ENCODE measurements at regions of chr17 and their contacts with region 1.

Region 1: GRCh38 chr17:76709077-76709950 is 1.5 kb downstream of the MXRA7 start:
- DNase-seq: peak in 5 of 6 donors; percentile 52 to 76 (median 65)
- ATAC-seq: peak; percentile 35 to 69 (median 57)
- H3K4me3 ChIP-seq: peak overlapping the region; percentile 49 to 69 (median 60)
- H3K27ac ChIP-seq: peak overlapping the region; percentile 76 to 81 (median 78)
- H3K4me1 ChIP-seq: peaks cover 8 to 12% (median 10%) of the 10 kb centered on the region in 3 donors
- H3K27me3 ChIP-seq: no peaks in the 10 kb centered on the region
- CTCF ChIP-seq: no peak

Region 2: GRCh38 chr17:76529224-76530094 is 179.9 kb before region 1 on chr17:
- intact Hi-C with region 1: loop called in 1 of 3 experiments (anchors 10 kb)
- DNase-seq: peak in 4 of 6 donors; percentile 33 to 78 (median 45)
- ATAC-seq: peak; percentile 10 to 67 (median 48)
- H3K4me3 ChIP-seq: no peak overlapping the region
- H3K27ac ChIP-seq: peak overlapping the region in 3 of 4 donors; percentile 28 to 62 (median 41)
- H3K4me1 ChIP-seq: peaks cover 5 to 8% (median 8%) of the 10 kb centered on the region in 3 donors
- H3K27me3 ChIP-seq: no peaks in the 10 kb centered on the region
- CTCF ChIP-seq: no peak

Region 3: DNA sequence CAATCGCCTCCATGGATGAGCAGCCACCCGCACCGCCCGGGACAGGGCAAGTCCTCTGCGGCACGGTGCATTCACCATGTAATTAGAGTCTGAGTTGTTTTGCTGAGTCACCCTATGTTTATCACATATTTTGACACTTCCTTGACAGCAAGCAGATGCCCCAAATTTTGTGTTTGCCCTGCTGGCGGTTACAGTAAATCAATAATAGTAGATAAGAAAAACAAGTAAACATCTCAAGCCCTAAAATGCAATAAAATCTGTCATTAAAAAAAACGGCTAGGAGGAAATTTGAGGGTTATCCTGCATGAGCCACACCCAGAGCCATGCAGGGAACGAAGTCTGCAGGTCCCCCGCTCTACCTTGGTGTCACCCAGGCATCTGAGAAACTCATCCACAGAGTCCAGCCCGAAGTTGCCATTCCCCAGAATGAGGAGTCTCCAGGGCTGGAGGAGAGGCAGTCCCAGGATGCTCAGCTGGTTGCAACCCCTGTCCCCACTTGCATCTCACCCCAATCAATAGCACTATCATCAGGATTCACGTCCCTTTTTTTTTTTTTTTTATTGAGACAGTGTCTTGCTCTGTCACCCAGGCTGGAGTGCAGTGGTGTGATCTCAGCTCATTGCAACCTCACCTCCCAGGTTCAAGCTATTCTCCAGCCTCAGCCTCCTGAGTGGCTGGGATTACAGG is 49.2 kb before region 1 on chr17:
- intact Hi-C with region 1: no loop called
- DNase-seq: no peak
- ATAC-seq: peak; percentile 85 to 90 (median 87)
- H3K4me3 ChIP-seq: no peak overlapping the region
- H3K27ac ChIP-seq: peak overlapping the region in 1 of 4 donors; percentile 0
- H3K4me1 ChIP-seq: peaks cover 0 to 16% (median 6%) of the 10 kb centered on the region in 3 donors
- H3K27me3 ChIP-seq: no peaks in the 10 kb centered on the region
- CTCF ChIP-seq: no peak

Measured in pancreas (tissue), 10 donors.